ENCODE measurements at regions of chr11 and their contacts with region 1.

Region 1: DNA sequence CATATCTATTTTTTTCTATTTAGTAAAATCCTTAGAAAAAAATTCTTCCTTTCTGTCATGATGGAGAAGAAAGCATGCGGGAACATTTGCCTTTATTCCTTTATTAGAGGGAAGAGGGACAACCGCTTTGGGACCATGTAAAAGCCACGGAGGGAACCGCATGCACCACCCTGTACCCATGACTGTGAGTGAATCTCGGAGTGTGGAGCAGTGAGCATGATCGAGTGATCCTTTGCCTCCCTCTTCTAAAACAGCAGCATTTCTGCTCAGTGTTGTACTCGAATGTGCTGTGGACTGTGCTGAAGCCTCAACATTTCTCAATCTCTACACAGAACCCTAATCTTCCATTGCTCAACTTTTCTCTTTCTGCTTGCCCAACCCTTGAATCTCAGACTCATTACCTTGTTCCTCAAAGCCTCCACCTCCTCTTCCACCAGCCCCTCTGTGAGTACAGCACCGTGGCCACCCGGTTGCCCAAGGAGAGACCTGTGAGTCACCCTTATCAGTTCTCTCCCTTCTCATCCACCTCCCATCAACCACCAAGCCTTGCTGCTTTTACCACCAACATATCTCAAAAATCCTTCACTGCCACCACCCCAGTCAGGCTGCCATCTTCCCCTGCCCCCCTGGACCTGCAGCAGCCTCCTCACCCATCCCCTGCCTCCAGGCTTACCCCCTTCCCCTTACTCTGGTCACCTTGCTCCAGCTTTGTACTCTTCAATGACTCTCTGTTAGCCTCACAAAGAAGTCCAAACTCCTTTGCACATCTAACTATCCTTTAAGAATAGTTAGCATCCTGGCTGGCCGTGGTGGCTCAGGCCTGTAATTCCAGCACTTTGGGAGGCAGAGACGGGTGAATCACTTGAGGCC is 103.1 kb downstream of the NAT10 start:
- DNase-seq: peak; percentile 59
- H3K4me3 Mint-ChIP-seq: peak overlapping the region; percentile 1
- H3K27ac Mint-ChIP-seq: peak overlapping the region; percentile 16
- H3K4me1 Mint-ChIP-seq: peaks cover 50% of the 10 kb centered on the region
- H3K27me3 Mint-ChIP-seq: no peaks in the 10 kb centered on the region
- CTCF ChIP-seq: no peak

Region 2: GRCh38 chr11:34192481-34193401 is 15.8 kb before region 1 on chr11:
- CTCF ChIA-PET with region 1: interaction called, 12 read pairs
- intact Hi-C with region 1: no loop called
- DNase-seq: peak; percentile 60
- H3K4me3 Mint-ChIP-seq: peak overlapping the region; percentile 25
- H3K27ac Mint-ChIP-seq: peak overlapping the region; percentile 34
- H3K4me1 Mint-ChIP-seq: peaks cover 43% of the 10 kb centered on the region
- H3K27me3 Mint-ChIP-seq: no peaks in the 10 kb centered on the region
- CTCF ChIP-seq: no peak

Measured in Calu3 (cell line).